Prostate gland (tissue), 2 donors: ENCODE measurements at regions of chr2 and their contacts with region 1.

Region 1: GRCh38 chr2:95185197-95185596 is 19.6 kb downstream of the ZNF2 start:
- DNase-seq: no peak
- H3K4me3 ChIP-seq: no peak overlapping the region
- H3K27ac ChIP-seq: no peak overlapping the region
- H3K4me1 ChIP-seq: no peaks in the 10 kb centered on the region
- H3K27me3 ChIP-seq: no peaks in the 10 kb centered on the region
- CTCF ChIP-seq: no peak
- POLR2A ChIP-seq: no peak

Region 2: DNA sequence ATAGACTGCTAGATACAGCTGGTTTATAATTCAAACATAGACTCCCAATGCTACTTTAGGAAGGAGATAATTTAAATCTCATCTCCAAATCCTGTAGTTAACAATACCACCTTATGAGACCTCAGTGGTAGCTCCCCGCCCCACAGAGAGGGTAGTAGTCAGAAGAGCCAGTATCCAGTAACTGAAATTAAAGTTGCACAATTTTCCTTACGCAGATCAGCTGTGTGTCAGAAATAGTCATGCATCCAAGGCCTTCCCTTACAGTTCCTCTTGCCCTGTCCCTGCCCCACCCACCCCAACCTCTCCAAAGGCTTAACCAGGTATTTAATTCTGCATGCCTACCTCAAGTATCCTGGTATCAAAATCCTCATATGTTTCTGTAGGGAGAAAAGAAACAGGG is 79.1 kb before region 1 on chr2:
- intact Hi-C with region 1: no loop called
- DNase-seq: no peak
- H3K4me3 ChIP-seq: no peak overlapping the region
- H3K27ac ChIP-seq: no peak overlapping the region
- H3K4me1 ChIP-seq: no peaks in the 10 kb centered on the region
- H3K27me3 ChIP-seq: no peaks in the 10 kb centered on the region
- CTCF ChIP-seq: no peak
- POLR2A ChIP-seq: no peak

Region 3: DNA sequence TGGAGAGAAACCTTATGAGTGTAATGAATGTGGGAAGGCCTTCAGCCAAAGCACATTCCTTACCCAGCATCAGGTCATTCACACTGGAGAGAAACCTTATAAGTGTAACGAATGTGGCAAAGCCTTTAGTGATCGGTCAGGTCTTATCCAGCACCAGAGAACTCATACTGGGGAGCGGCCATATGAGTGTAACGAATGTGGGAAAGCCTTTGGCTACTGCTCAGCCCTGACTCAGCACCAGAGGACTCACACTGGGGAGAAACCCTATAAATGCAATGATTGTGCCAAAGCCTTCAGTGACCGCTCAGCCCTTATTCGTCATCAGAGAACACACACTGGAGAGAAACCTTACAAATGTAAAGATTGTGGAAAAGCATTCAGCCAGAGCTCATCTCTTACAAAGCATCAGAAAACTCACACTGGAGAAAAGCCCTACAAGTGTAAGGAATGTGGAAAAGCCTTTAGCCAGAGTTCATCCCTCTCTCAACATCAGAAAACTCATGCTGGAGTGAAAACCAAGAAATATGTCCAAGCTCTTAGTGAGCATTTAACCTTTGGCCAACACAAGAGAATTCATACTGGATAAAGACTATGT is 29.9 kb after region 1 on chr2:
- intact Hi-C with region 1: no loop called
- DNase-seq: no peak
- H3K4me3 ChIP-seq: no peak overlapping the region
- H3K27ac ChIP-seq: no peak overlapping the region
- H3K4me1 ChIP-seq: no peaks in the 10 kb centered on the region
- H3K27me3 ChIP-seq: no peaks in the 10 kb centered on the region
- CTCF ChIP-seq: no peak
- POLR2A ChIP-seq: no peak

Region 4: GRCh38 chr2:95314964-95315611 is 129.9 kb after region 1 on chr2:
- intact Hi-C with region 1: loop called (anchors 10 kb)
- DNase-seq: peak; percentile 59
- H3K4me3 ChIP-seq: no peak overlapping the region
- H3K27ac ChIP-seq: no peak overlapping the region
- H3K4me1 ChIP-seq: no peaks in the 10 kb centered on the region
- H3K27me3 ChIP-seq: no peaks in the 10 kb centered on the region
- CTCF ChIP-seq: peak; percentile 73 to 88 (median 82)
- POLR2A ChIP-seq: no peak

Region 5: DNA sequence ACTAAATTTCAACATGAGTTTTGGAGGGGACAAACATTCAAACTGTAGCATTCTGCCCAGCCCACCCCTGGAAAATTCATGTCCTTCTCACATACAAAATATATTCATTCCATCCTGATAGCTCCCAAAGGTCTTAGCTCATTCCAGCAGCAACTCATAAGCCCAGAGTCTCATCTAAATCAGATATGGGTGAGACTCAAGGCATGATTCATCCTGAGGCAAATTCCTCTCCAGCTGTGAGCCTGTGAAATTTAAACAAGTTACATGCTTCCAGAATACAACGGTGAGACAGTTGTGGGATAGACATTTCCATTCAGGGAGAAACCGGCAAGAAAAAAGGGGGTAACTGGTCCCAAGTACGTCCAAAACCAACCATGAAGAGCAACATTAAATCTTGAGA is 173.8 kb after region 1 on chr2:
- intact Hi-C with region 1: no loop called
- DNase-seq: no peak
- H3K4me3 ChIP-seq: no peak overlapping the region
- H3K27ac ChIP-seq: no peak overlapping the region
- H3K4me1 ChIP-seq: no peaks in the 10 kb centered on the region
- H3K27me3 ChIP-seq: no peaks in the 10 kb centered on the region
- CTCF ChIP-seq: no peak
- POLR2A ChIP-seq: no peak